T-cell (primary cell): ENCODE measurements at regions of chr14 and their contacts with region 1.

Region 1: DNA sequence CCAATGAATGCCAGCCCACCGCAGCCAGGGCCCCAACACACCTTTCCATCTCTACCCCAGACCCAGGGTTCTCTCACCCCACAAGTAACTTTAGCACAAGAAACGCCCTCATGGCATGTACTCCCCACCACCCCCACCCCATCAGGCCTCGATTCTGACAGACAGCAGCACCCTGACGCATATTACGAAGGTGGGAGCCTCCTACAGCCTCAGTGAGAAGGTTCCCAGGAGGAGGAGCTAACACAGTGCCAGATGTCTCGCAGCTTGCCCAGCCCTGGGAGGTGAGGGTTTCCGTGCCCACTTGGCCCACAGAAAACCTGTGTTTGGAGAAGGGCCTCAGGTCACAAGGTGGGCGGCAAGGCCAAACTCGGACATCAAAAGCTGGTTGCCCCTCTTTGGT is 32.4 kb downstream of the CCDC88C start:
- DNase-seq: no peak
- ATAC-seq: no peak
- H3K4me3 ChIP-seq: no peak overlapping the region
- H3K4me3 Mint-ChIP-seq: peak overlapping the region in 2 of 3 donors; percentile 21 to 64
- H3K27ac ChIP-seq: peak overlapping the region; percentile 42
- H3K27ac Mint-ChIP-seq: peak overlapping the region; percentile 86 to 87
- H3K4me1 ChIP-seq: peaks cover 27 to 98% of the 10 kb centered on the region in 2 experiments
- H3K4me1 Mint-ChIP-seq: peaks cover 88 to 94% (median 90%) of the 10 kb centered on the region in 3 donors
- H3K27me3 ChIP-seq: no peaks in the 10 kb centered on the region
- H3K27me3 Mint-ChIP-seq: no peaks in the 10 kb centered on the region

Region 2: GRCh38 chr14:91373591-91374254 is 11.5 kb before region 1 on chr14:
- CTCF ChIA-PET with region 1: interaction called in 1 of 2 experiments, 3 read pairs
- POLR2A ChIA-PET with region 1: interaction called in 1 of 2 experiments, 16 read pairs
- DNase-seq: peak in 19 of 35 experiments; percentile 35 to 77 (median 55)
- ATAC-seq: peak; percentile 54 to 66 (median 60)
- H3K4me3 ChIP-seq: peak overlapping the region; percentile 37 to 66
- H3K4me3 Mint-ChIP-seq: peak overlapping the region; percentile 70 to 84 (median 72)
- H3K27ac ChIP-seq: peak overlapping the region; percentile 87
- H3K27ac Mint-ChIP-seq: peak overlapping the region; percentile 91 to 95
- H3K4me1 ChIP-seq: peaks cover 77 to 100% of the 10 kb centered on the region in 2 experiments
- H3K4me1 Mint-ChIP-seq: peaks cover 97 to 100% (median 98%) of the 10 kb centered on the region in 3 donors
- H3K27me3 ChIP-seq: no peaks in the 10 kb centered on the region
- H3K27me3 Mint-ChIP-seq: no peaks in the 10 kb centered on the region